ENCODE measurements at regions of chr5 and their contacts with region 1.

Region 1: GRCh38 chr5:154467655-154468354 is 10.2 kb downstream of the HAND1 start:
- DNase-seq: peak in 1 of 2 experiments; percentile 96
- H3K4me3 ChIP-seq: no peak overlapping the region
- H3K27ac ChIP-seq: no peak overlapping the region
- H3K4me1 ChIP-seq: peaks cover 0 to 6% (median 4%) of the 10 kb centered on the region in 4 experiments; a peak in 5 of 7 replicates
- H3K27me3 ChIP-seq: peaks cover 37 to 57% (median 48%) of the 10 kb centered on the region in 4 experiments
- CTCF ChIP-seq: peak; percentile 95 to 96 (median 95)
- EP300 ChIP-seq: no peak
- POLR2A ChIP-seq: no peak
- RAD21 ChIP-seq: peak; percentile 91 to 92

Region 2: DNA sequence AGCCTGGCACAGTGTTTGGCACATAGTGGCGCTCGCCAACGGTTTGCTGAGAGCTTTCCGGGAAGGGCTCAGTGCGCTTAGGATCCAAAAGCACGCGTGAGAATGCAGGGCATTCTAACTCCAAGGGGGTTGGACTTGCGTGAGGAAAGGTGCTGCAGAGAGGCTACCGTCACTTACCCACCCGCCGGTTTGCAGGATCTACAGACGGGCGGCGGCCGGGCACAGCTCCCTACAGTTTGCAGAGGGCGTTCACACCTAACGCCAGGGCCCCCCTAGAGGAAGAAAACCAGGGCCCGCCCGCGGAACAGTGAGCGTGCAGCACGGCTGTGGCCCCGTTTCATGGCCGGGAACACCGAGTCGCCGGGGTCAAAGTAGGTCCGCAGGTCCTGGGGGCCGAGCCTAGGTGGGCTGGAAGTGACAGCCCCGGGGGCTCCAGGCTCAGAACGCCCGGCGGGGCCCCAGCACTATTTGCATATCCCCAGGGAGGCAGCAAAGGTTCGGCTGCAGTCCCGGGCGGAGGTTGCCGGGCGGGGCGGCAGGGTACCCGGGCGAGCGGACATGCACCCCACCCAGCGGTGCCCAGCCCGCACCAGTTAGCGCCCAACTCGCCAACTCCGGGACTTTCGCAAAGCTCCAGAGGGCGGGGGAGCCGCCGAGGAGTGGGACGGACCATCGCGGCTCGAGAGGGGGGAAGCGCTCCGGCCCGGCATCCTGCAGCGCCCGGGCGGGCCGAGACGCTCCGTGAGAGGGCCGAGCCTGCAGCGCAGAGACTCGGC is 277.8 kb before region 1 on chr5:
- CTCF ChIA-PET with region 1: no interaction called
- POLR2A ChIA-PET with region 1: no interaction called
- DNase-seq: peak in 1 of 2 experiments; percentile 84
- H3K4me3 ChIP-seq: peak overlapping the region; percentile 45 to 77 (median 56)
- H3K27ac ChIP-seq: peak overlapping the region; percentile 71; the same call in 1 of the 2 replicates
- H3K4me1 ChIP-seq: peaks cover 6 to 18% (median 10%) of the 10 kb centered on the region in 4 experiments; a peak in 5 of 7 replicates
- H3K27me3 ChIP-seq: peaks cover 12 to 50% (median 39%) of the 10 kb centered on the region in 4 experiments
- CTCF ChIP-seq: peak in 2 of 3 experiments; percentile 16 to 27; a peak in 3 of 4 replicates
- EP300 ChIP-seq: peak in 1 of 2 experiments; percentile 73; a peak in 1 of 3 replicates
- POLR2A ChIP-seq: no peak; a peak in 1 of 3 replicates
- RAD21 ChIP-seq: peak in 1 of 2 experiments; percentile 11; a peak in 1 of 4 replicates

Region 3: GRCh38 chr5:154334406-154335064 is 133.3 kb before region 1 on chr5:
- CTCF ChIA-PET with region 1: no interaction called
- POLR2A ChIA-PET with region 1: no interaction called
- DNase-seq: no peak
- H3K4me3 ChIP-seq: no peak overlapping the region
- H3K27ac ChIP-seq: no peak overlapping the region
- H3K4me1 ChIP-seq: peaks cover 0 to 3% (median 0%) of the 10 kb centered on the region in 4 experiments; a peak in 2 of 7 replicates
- H3K27me3 ChIP-seq: no peaks in the 10 kb centered on the region
- CTCF ChIP-seq: no peak
- EP300 ChIP-seq: no peak
- POLR2A ChIP-seq: no peak
- RAD21 ChIP-seq: no peak

Region 4: GRCh38 chr5:154445422-154446182 is 22.2 kb before region 1 on chr5 and contains the start of gene SAP30L:
- CTCF ChIA-PET with region 1: interaction called, 67 read pairs
- POLR2A ChIA-PET with region 1: no interaction called
- DNase-seq: peak; percentile 68 to 99
- H3K4me3 ChIP-seq: peak within 1 kb of the TSS; percentile 80 to 93 (median 92)
- H3K27ac ChIP-seq: no peak within 1 kb of the TSS
- H3K4me1 ChIP-seq: peaks cover 0 to 7% (median 2%) of the 10 kb centered on the region in 4 experiments; a peak in 3 of 7 replicates
- H3K27me3 ChIP-seq: peaks cover 0 to 3% (median 0%) of the 10 kb centered on the region in 4 experiments; a peak in 1 of 7 replicates
- CTCF ChIP-seq: no peak
- EP300 ChIP-seq: no peak
- POLR2A ChIP-seq: no peak
- RAD21 ChIP-seq: no peak
- total RNA-seq, gene SAP30L: 26.3 and 31.5 TPM in 2 replicates

Region 5: DNA sequence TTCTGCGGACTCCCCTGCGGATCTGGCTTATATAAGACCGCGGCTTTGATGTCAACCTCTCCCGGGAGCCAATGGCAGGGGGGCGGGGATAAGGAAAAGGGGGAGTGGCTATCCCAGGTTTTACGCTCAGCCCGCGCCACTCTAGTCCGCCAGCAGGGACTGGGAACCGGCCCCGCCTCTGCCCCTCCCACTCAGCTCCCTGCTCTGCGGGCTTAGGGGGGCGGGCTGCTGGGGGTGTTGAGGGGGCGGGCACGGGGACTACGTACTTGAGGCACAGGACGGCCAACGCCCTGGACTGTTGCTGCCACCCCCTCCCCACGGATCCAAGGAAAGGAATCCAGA is 10.4 kb after region 1 on chr5 and contains the start of gene HAND1:
- CTCF ChIA-PET with region 1: interaction called, 61 read pairs
- POLR2A ChIA-PET with region 1: interaction called, 16 read pairs
- DNase-seq: peak in 1 of 2 experiments; percentile 93
- H3K4me3 ChIP-seq: peak within 1 kb of the TSS; percentile 27 to 58 (median 38); a peak in 7 of 8 replicates
- H3K27ac ChIP-seq: no peak within 1 kb of the TSS
- H3K4me1 ChIP-seq: peaks cover 26 to 62% (median 34%) of the 10 kb centered on the region in 4 experiments
- H3K27me3 ChIP-seq: peaks cover 96 to 100% (median 99%) of the 10 kb centered on the region in 4 experiments
- CTCF ChIP-seq: no peak
- EP300 ChIP-seq: no peak
- POLR2A ChIP-seq: no peak
- RAD21 ChIP-seq: no peak
- total RNA-seq, gene HAND1: not detected in 2 replicates

Region 6: GRCh38 chr5:154505611-154506010 is 37.8 kb after region 1 on chr5:
- CTCF ChIA-PET with region 1: interaction called, 44 read pairs
- POLR2A ChIA-PET with region 1: no interaction called
- DNase-seq: no peak
- H3K4me3 ChIP-seq: no peak overlapping the region
- H3K27ac ChIP-seq: no peak overlapping the region
- H3K4me1 ChIP-seq: peaks cover 1 to 7% (median 4%) of the 10 kb centered on the region in 4 experiments; a peak in 4 of 7 replicates
- H3K27me3 ChIP-seq: no peaks in the 10 kb centered on the region
- CTCF ChIP-seq: peak; percentile 21 to 45 (median 31); a peak in 3 of 4 replicates
- EP300 ChIP-seq: no peak
- POLR2A ChIP-seq: no peak
- RAD21 ChIP-seq: no peak; a peak in 1 of 4 replicates

Region 7: DNA sequence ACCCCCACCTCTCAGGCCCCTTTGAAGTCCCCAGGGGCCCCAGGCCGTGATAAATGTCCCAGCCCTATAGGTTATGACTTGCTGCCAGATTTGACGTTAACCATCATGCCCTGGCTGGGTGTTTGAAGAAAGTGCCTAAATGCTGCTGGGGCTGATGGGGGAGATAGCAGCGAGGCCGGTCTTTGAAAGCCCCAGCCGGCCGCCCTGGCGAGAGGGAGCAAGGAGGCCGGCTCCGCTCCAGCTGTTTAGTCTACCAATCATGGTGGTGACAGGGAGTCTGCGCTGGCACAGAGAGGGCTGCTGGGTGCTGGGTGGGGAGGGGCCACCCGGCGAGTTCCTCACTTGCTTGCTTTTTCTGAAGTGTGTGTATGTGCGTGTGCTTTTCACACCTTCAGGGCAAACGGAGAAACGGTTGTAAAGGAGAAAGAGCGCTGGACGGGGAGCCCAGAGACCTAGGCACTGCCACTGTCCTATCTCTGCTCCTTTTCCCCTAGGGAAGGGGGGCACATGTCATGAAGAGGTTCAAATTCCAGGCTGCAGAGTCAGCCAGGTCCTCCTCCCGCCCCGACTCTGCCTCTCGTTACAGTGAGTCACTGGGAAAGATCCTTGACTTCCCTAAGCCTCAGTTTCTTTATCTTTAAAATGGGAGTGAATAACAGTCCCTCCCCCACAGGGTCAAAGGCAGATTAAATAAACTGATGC is 136.3 kb after region 1 on chr5:
- CTCF ChIA-PET with region 1: interaction called, 273 read pairs
- POLR2A ChIA-PET with region 1: no interaction called
- DNase-seq: peak in 1 of 2 experiments; percentile 57
- H3K4me3 ChIP-seq: peak overlapping the region in 1 of 4 experiments; percentile 37; a peak in 1 of 8 replicates
- H3K27ac ChIP-seq: no peak overlapping the region
- H3K4me1 ChIP-seq: peaks cover 2 to 7% (median 5%) of the 10 kb centered on the region in 4 experiments; a peak in 4 of 7 replicates
- H3K27me3 ChIP-seq: peaks cover 0 to 15% (median 12%) of the 10 kb centered on the region in 4 experiments; a peak in 5 of 7 replicates
- CTCF ChIP-seq: no peak
- EP300 ChIP-seq: no peak
- POLR2A ChIP-seq: no peak
- RAD21 ChIP-seq: no peak

Region 8: DNA sequence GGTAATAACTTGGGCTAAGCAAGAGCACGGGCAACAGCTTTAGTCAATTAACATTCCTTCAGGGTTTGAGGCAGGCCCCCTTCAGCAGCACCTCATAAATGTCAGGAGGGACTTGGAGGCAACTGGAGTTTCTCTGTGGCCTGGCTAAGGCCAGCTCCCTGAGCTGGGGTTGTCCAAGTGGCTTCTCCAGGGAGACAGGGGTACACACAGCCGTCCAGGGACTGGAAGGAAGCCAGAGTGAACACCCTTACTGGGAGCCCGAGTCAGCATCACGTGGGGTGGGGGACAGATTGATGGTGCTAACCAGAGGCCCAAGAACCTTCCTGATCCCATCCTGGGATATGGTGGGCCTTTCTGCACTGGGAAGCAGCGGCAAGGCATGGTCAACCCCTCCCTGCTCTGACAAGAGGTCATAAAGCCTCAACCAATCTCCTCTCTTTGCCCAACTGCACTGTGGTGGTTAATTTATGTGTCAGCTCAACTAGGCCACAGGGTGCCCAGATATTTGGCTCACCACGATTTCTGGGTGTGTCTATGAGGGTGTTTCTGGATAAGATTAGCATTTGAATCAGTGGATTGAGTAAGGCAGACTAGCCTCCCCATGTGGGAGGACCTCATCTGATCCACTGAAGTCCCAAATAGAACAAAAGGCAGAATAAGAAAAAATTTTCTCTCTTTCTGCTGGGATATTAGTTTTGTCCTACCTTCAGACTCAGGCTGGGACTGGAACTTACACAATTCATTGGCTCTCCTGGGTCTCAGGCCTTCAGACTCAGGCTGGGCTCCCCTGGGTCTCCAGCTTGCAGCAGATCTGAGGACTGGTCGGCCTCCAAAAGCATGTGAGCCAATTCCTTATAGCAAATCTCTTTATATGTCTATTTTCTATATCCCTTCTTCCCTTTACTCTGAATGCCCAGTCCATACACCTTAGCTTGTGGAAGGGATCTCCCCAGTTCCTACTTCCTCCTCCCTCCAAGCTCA is 160.2 kb after region 1 on chr5:
- CTCF ChIA-PET with region 1: interaction called, 34 read pairs
- POLR2A ChIA-PET with region 1: no interaction called
- DNase-seq: no peak
- H3K4me3 ChIP-seq: no peak overlapping the region
- H3K27ac ChIP-seq: peak overlapping the region; percentile 26; the same call in 1 of the 2 replicates
- H3K4me1 ChIP-seq: no peaks in the 10 kb centered on the region; a peak in 1 of 7 replicates
- H3K27me3 ChIP-seq: no peaks in the 10 kb centered on the region
- CTCF ChIP-seq: no peak
- EP300 ChIP-seq: no peak
- POLR2A ChIP-seq: no peak
- RAD21 ChIP-seq: no peak